H1 (cell line): ENCODE measurements at regions of chr16 and their contacts with region 1.

Region 1: GRCh38 chr16:89860747-89861304 is 12.6 kb upstream of the TCF25 start:
- DNase-seq: peak; percentile 65 to 97
- H3K4me3 ChIP-seq: no peak overlapping the region
- H3K27ac ChIP-seq: no peak overlapping the region
- H3K4me1 ChIP-seq: peaks cover 0 to 2% (median 0%) of the 10 kb centered on the region in 4 experiments; a peak in 2 of 7 replicates
- H3K27me3 ChIP-seq: no peaks in the 10 kb centered on the region
- CTCF ChIP-seq: peak; percentile 95 to 98 (median 95)
- EP300 ChIP-seq: no peak
- POLR2A ChIP-seq: no peak
- RAD21 ChIP-seq: peak; percentile 98

Region 2: GRCh38 chr16:89700100-89700648 is 160.7 kb before region 1 on chr16:
- CTCF ChIA-PET with region 1: interaction called, 13 read pairs
- POLR2A ChIA-PET with region 1: no interaction called
- DNase-seq: peak; percentile 98
- H3K4me3 ChIP-seq: peak overlapping the region; percentile 49 to 78 (median 74)
- H3K27ac ChIP-seq: peak overlapping the region; percentile 28; the same call in 1 of the 2 replicates
- H3K4me1 ChIP-seq: peaks cover 0 to 11% (median 5%) of the 10 kb centered on the region in 4 experiments; a peak in 5 of 7 replicates
- H3K27me3 ChIP-seq: peaks cover 0 to 9% (median 2%) of the 10 kb centered on the region in 4 experiments; a peak in 3 of 7 replicates
- CTCF ChIP-seq: peak; percentile 22 to 56 (median 32)
- EP300 ChIP-seq: peak in 1 of 2 experiments; percentile 73; a peak in 1 of 3 replicates
- POLR2A ChIP-seq: peak in 1 of 2 experiments; percentile 53; a peak in 1 of 3 replicates
- RAD21 ChIP-seq: peak; percentile 54 to 61

Region 3: GRCh38 chr16:89795676-89796075 is 65.2 kb before region 1 on chr16:
- CTCF ChIA-PET with region 1: interaction called, 44 read pairs
- POLR2A ChIA-PET with region 1: interaction called, 3 read pairs
- DNase-seq: no peak
- H3K4me3 ChIP-seq: no peak overlapping the region
- H3K27ac ChIP-seq: no peak overlapping the region
- H3K4me1 ChIP-seq: no peaks in the 10 kb centered on the region
- H3K27me3 ChIP-seq: no peaks in the 10 kb centered on the region
- CTCF ChIP-seq: no peak
- EP300 ChIP-seq: no peak
- POLR2A ChIP-seq: no peak
- RAD21 ChIP-seq: no peak

Region 4: GRCh38 chr16:89815639-89816348 is 45.0 kb before region 1 on chr16:
- CTCF ChIA-PET with region 1: interaction called, 25 read pairs
- POLR2A ChIA-PET with region 1: interaction called, 6 read pairs
- DNase-seq: peak in 1 of 2 experiments; percentile 49
- H3K4me3 ChIP-seq: peak overlapping the region; percentile 61 to 82 (median 66)
- H3K27ac ChIP-seq: no peak overlapping the region
- H3K4me1 ChIP-seq: peaks cover 0 to 5% (median 0%) of the 10 kb centered on the region in 4 experiments; a peak in 3 of 7 replicates
- H3K27me3 ChIP-seq: no peaks in the 10 kb centered on the region; a peak in 1 of 7 replicates
- CTCF ChIP-seq: no peak
- EP300 ChIP-seq: no peak
- POLR2A ChIP-seq: no peak
- RAD21 ChIP-seq: no peak

Region 5: DNA sequence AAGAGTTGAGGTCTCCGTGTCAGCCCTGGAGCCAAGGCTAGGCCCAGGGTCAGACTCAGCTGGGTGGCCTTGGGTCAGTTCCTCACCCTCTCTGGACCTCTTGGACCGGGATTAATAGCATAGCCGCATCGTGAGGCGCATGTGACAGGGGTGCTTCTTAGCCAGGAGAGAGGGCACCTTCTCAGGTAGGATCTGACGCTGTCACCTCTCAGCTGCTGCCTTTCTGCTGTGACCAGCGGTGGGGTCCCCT is 23.6 kb before region 1 on chr16:
- CTCF ChIA-PET with region 1: interaction called, 21 read pairs
- POLR2A ChIA-PET with region 1: no interaction called
- DNase-seq: no peak
- H3K4me3 ChIP-seq: no peak overlapping the region
- H3K27ac ChIP-seq: no peak overlapping the region
- H3K4me1 ChIP-seq: peaks cover 0 to 5% (median 1%) of the 10 kb centered on the region in 4 experiments; a peak in 2 of 7 replicates
- H3K27me3 ChIP-seq: no peaks in the 10 kb centered on the region
- CTCF ChIP-seq: no peak
- EP300 ChIP-seq: no peak
- POLR2A ChIP-seq: no peak
- RAD21 ChIP-seq: no peak

Region 6: DNA sequence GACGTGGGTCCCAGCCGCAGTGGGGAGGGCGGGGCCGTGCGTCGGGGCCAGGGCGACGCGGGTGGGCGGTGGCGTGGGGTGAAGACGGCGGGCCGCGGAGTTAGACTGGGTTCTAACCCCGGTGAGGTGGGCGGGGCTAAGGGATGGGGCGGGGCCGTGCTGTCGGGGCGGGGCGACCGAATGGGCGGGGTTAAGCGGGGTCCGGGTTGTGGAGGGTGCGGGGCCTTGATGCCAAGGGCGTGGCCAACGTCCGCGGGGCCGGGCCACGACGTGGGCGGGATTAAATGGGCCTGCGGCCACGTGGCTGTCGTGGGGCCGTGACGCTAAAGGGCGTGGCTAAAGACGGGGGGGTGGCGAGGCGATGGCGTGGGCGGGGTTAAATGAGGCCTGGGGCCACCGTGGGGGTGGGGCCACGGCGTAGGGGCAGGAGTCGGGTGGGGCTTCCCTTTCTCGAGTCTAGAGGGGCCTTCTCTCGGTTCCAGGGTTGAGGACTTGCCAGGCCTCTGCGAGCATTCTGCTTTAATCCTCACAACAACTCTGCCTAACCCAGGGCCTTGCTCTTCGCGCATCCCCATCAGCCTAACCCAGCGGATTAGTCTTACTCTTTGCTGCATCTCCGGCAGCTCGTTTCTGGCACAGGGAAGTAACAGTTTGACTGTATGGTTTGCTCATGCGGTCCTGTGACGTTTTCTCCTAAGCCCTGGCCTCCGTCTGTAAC is 13.3 kb after region 1 on chr16:
- CTCF ChIA-PET with region 1: interaction called, 24 read pairs
- POLR2A ChIA-PET with region 1: interaction called, 14 read pairs
- DNase-seq: peak; percentile 92 to 98
- H3K4me3 ChIP-seq: peak overlapping the region; percentile 84 to 97 (median 90)
- H3K27ac ChIP-seq: peak overlapping the region; percentile 40; the same call in 1 of the 2 replicates
- H3K4me1 ChIP-seq: peaks cover 0 to 9% (median 2%) of the 10 kb centered on the region in 4 experiments; a peak in 4 of 7 replicates
- H3K27me3 ChIP-seq: no peaks in the 10 kb centered on the region
- CTCF ChIP-seq: no peak
- EP300 ChIP-seq: no peak
- POLR2A ChIP-seq: peak in 1 of 2 experiments; percentile 35; a peak in 1 of 3 replicates
- RAD21 ChIP-seq: no peak